ENCODE measurements at regions of chr9 and their contacts with region 1.

Region 1: GRCh38 chr9:68437785-68438184 is 81.4 kb downstream of the PGM5 start:
- DNase-seq: peak in 1 of 2 donors; percentile 15
- ATAC-seq: peak in 1 of 4 donors; percentile 44
- H3K4me3 ChIP-seq: no peak overlapping the region
- H3K27ac ChIP-seq: no peak overlapping the region
- H3K4me1 ChIP-seq: no peaks in the 10 kb centered on the region
- H3K27me3 ChIP-seq: no peaks in the 10 kb centered on the region
- CTCF ChIP-seq: no peak

Region 2: GRCh38 chr9:68427216-68427977 is 10.4 kb before region 1 on chr9:
- intact Hi-C with region 1: loop called in 1 of 2 experiments (anchors 1 kb)
- DNase-seq: no peak
- ATAC-seq: no peak
- H3K4me3 ChIP-seq: no peak overlapping the region
- H3K27ac ChIP-seq: no peak overlapping the region
- H3K4me1 ChIP-seq: peaks cover 18% of the 10 kb centered on the region
- H3K27me3 ChIP-seq: no peaks in the 10 kb centered on the region
- CTCF ChIP-seq: no peak

Region 3: DNA sequence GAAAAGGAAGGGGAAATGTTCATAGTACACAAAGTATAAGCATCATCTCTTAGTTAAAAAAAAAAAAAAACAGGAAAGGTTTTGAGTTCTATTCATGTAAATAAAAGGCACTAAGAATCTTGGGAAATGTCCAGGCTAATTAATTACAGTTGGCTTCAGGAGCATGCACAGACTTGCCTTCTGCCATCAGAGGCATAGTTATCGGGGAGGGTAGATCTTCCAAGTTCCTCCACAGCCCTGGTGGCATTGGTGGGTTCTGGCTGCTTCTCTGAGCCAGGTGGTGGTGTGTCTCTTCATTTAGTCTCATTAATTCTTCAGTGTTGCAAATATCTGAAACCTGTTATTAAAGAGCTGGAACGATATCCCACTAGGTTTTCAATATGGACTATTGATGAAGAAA is 17.7 kb after region 1 on chr9:
- intact Hi-C with region 1: loop called in 1 of 2 experiments (anchors 2 kb)
- DNase-seq: no peak
- ATAC-seq: no peak
- H3K4me3 ChIP-seq: no peak overlapping the region
- H3K27ac ChIP-seq: no peak overlapping the region
- H3K4me1 ChIP-seq: no peaks in the 10 kb centered on the region
- H3K27me3 ChIP-seq: no peaks in the 10 kb centered on the region
- CTCF ChIP-seq: no peak

Region 4: GRCh38 chr9:68482548-68482947 is 44.8 kb after region 1 on chr9:
- intact Hi-C with region 1: loop called in 1 of 2 experiments (anchors 5 kb)
- DNase-seq: no peak
- ATAC-seq: no peak
- H3K4me3 ChIP-seq: no peak overlapping the region
- H3K27ac ChIP-seq: no peak overlapping the region
- H3K4me1 ChIP-seq: no peaks in the 10 kb centered on the region
- H3K27me3 ChIP-seq: no peaks in the 10 kb centered on the region
- CTCF ChIP-seq: no peak

Region 5: DNA sequence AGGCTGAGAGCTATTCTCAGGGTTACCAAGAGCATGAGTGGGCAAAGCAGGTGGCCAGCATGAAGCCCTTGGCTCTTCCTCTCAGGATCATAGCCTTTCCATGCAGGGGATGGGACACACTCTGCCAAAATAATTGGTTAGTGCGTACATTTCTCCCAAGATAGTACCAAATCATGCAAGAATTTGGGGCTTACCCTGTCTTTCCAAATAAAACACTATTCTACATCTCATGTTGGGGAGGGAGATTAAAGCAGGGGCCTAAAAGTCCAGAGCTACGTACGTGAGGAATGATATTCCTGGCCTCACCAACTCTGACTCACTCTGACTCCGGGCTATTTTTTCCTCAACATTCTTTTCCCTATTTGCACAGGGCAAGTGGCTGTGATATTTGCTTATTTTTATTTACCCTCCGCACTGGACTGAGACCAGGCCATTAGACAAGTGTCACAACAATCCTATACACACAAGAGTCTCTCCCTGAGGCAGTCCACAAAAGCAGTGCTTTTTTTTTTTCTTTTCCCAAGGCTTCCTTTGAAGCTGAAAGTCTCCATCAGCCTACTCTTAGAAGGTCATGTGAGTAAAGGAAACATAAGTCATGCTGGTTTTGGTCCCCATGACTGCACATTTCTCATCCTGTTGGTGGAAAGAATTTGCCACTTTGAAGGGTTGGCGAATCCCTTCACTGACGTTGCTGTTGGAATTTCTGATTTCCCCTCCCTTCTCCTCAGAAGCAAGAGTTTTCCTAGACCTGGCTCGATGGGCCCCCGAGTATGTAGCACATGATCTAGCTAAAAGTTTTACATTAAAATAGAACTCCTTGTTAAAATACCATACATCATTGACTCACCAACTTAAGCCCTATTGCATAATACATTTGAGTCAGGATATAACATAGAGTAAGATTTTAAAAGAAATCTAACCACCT is 62.9 kb after region 1 on chr9:
- intact Hi-C with region 1: no loop called
- DNase-seq: no peak
- ATAC-seq: peak; percentile 71 to 93 (median 90)
- H3K4me3 ChIP-seq: no peak overlapping the region
- H3K27ac ChIP-seq: peak overlapping the region; percentile 43
- H3K4me1 ChIP-seq: peaks cover 14% of the 10 kb centered on the region
- H3K27me3 ChIP-seq: no peaks in the 10 kb centered on the region
- CTCF ChIP-seq: no peak